ENCODE measurements at regions of chr1 and their contacts with region 1.

Region 1: DNA sequence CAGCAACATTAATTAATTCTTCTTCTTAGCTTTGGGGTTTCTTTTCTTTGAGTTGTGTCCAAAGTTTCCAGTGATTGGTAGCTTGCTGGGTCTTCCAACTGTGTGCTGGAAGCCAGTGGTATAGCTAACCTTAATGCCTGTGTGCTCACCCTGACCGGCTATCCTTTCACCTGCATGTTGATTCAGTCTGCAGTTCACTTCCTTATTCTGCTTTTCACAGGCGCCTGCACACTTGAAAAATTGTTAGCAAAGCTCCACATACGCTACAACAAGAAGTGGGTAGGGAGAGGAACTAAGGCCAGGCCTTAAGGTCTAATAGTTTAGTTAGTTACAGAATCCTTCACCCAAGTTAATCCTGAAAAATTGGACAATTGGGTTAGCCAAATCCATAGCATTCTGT is 35.7 kb downstream of the NCF2 start:
- DNase-seq: no peak
- ATAC-seq: no peak
- H3K4me3 ChIP-seq: no peak overlapping the region
- H3K27ac ChIP-seq: no peak overlapping the region
- H3K4me1 ChIP-seq: no peaks in the 10 kb centered on the region
- H3K27me3 ChIP-seq: no peaks in the 10 kb centered on the region

Region 2: DNA sequence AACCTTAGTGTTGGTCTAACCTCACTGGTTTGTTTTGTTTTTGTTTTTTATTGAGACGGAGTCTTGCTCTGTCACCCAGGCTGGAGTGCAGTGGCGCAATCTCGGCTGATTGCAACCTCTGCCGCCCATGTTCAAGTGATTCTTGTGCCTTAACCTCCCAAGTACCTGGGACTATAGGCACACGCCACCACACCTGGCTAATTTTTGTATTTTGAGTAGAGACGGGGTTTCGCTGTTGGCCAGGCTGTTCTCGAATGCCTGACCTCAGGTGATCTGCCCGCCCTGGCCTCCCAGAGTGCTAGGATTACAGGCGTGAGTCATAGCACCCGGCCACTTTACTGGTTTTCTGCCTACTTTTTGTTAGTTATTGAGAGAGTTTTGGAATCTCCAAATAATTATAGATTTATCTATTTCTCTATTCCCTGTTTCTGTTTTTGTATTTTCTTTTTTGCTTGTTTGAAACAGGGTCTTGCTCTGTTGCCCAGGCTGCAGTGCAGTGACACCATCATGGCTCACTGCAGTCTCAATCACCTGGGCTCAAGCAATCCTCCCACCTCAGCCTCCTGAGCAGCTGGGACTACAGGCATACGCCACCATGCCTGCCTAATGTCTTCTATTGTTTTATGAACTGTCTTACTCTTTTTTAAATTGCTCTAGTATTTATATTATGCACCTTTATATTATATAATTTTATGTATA is 60.9 kb before region 1 on chr1:
- intact Hi-C with region 1: no loop called
- DNase-seq: peak in 1 of 3 donors; percentile 6
- ATAC-seq: no peak
- H3K4me3 ChIP-seq: no peak overlapping the region
- H3K27ac ChIP-seq: no peak overlapping the region
- H3K4me1 ChIP-seq: peaks cover 5% of the 10 kb centered on the region
- H3K27me3 ChIP-seq: no peaks in the 10 kb centered on the region

Region 3: GRCh38 chr1:183622884-183623785 is 68.6 kb after region 1 on chr1:
- intact Hi-C with region 1: loop called in 1 of 4 experiments (anchors 10 kb)
- DNase-seq: peak in 2 of 3 donors; percentile 50 to 67
- ATAC-seq: peak; percentile 87
- H3K4me3 ChIP-seq: no peak overlapping the region
- H3K27ac ChIP-seq: no peak overlapping the region
- H3K4me1 ChIP-seq: peaks cover 2% of the 10 kb centered on the region
- H3K27me3 ChIP-seq: no peaks in the 10 kb centered on the region